Endothelial cell of umbilical vein (primary cell): ENCODE measurements at regions of chr4 and their contacts with region 1.

Region 1: GRCh38 chr4:142126890-142127497 is 490.6 kb downstream of the IL15 start:
- DNase-seq: peak; percentile 89
- H3K4me3 ChIP-seq: no peak overlapping the region
- H3K27ac ChIP-seq: no peak overlapping the region
- H3K4me1 ChIP-seq: peaks cover 40% of the 10 kb centered on the region
- H3K27me3 ChIP-seq: no peaks in the 10 kb centered on the region
- CTCF ChIP-seq: peak; percentile 55 to 61
- POLR2A ChIP-seq: no peak

Region 2: GRCh38 chr4:141158219-141158618 is 968.8 kb before region 1 on chr4:
- CTCF ChIA-PET with region 1: no interaction called
- POLR2A ChIA-PET with region 1: no interaction called
- dilution Hi-C with region 1: no loop called
- intact Hi-C with region 1: loop called (anchors 5 kb)
- DNase-seq: peak; percentile 37
- H3K4me3 ChIP-seq: no peak overlapping the region
- H3K27ac ChIP-seq: no peak overlapping the region
- H3K4me1 ChIP-seq: no peaks in the 10 kb centered on the region
- H3K27me3 ChIP-seq: peaks cover under 1 to 3% of the 10 kb centered on the region in 2 experiments
- CTCF ChIP-seq: peak in 1 of 2 donors; percentile 28
- POLR2A ChIP-seq: no peak

Region 3: GRCh38 chr4:142265536-142265935 is 138.5 kb after region 1 on chr4:
- CTCF ChIA-PET with region 1: interaction called, 3 read pairs
- POLR2A ChIA-PET with region 1: no interaction called
- dilution Hi-C with region 1: no loop called
- intact Hi-C with region 1: loop called (anchors 5 kb)
- DNase-seq: peak; percentile 70
- H3K4me3 ChIP-seq: no peak overlapping the region
- H3K27ac ChIP-seq: no peak overlapping the region
- H3K4me1 ChIP-seq: peaks cover 22% of the 10 kb centered on the region
- H3K27me3 ChIP-seq: no peaks in the 10 kb centered on the region
- CTCF ChIP-seq: no peak
- POLR2A ChIP-seq: no peak

Region 4: GRCh38 chr4:142645475-142646108 is 518.6 kb after region 1 on chr4:
- CTCF ChIA-PET with region 1: no interaction called
- POLR2A ChIA-PET with region 1: no interaction called
- dilution Hi-C with region 1: no loop called
- intact Hi-C with region 1: loop called (anchors 10 kb)
- DNase-seq: peak; percentile 78
- H3K4me3 ChIP-seq: no peak overlapping the region
- H3K27ac ChIP-seq: no peak overlapping the region
- H3K4me1 ChIP-seq: peaks cover 8% of the 10 kb centered on the region
- H3K27me3 ChIP-seq: no peaks in the 10 kb centered on the region
- CTCF ChIP-seq: no peak
- POLR2A ChIP-seq: no peak

Region 5: DNA sequence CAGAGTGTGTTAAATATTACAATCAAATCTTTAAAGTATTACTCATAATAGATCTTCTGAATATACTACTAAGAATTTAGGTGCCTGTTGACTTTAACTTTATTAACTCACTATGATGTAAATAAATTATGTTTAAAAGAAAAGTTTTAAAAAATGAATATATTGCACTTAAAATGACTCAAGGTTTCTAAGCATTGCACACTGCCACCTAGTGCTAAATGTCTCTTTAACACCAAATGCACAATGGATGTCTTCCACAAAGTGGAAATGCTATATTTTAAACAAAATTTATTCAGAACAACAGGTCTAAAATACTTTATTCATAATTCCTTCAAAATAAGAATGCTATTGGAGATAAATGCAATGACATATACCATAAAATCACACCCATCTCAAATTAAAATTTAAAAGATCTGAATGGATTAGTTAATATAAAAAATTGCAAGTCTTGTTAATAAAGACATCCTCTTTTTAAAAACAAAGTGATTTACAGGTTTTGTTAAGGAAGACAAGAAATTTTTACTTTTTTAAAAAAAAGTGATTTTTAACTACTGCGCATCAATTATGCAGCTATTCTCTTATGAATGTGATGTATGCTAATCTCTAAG is 713.6 kb after region 1 on chr4:
- CTCF ChIA-PET with region 1: interaction called, 6 read pairs
- POLR2A ChIA-PET with region 1: no interaction called
- dilution Hi-C with region 1: no loop called
- intact Hi-C with region 1: loop called (anchors 1 kb)
- DNase-seq: peak; percentile 62
- H3K4me3 ChIP-seq: no peak overlapping the region
- H3K27ac ChIP-seq: no peak overlapping the region
- H3K4me1 ChIP-seq: no peaks in the 10 kb centered on the region
- H3K27me3 ChIP-seq: peaks cover 0 to 6% of the 10 kb centered on the region in 2 experiments
- CTCF ChIP-seq: peak; percentile 47
- POLR2A ChIP-seq: no peak